Caki2 (cell line): ENCODE measurements at regions of chr14 and their contacts with region 1.

Region 1: GRCh38 chr14:35159742-35160409 is 37.5 kb downstream of the PRORP start:
- DNase-seq: peak; percentile 88

Region 2: DNA sequence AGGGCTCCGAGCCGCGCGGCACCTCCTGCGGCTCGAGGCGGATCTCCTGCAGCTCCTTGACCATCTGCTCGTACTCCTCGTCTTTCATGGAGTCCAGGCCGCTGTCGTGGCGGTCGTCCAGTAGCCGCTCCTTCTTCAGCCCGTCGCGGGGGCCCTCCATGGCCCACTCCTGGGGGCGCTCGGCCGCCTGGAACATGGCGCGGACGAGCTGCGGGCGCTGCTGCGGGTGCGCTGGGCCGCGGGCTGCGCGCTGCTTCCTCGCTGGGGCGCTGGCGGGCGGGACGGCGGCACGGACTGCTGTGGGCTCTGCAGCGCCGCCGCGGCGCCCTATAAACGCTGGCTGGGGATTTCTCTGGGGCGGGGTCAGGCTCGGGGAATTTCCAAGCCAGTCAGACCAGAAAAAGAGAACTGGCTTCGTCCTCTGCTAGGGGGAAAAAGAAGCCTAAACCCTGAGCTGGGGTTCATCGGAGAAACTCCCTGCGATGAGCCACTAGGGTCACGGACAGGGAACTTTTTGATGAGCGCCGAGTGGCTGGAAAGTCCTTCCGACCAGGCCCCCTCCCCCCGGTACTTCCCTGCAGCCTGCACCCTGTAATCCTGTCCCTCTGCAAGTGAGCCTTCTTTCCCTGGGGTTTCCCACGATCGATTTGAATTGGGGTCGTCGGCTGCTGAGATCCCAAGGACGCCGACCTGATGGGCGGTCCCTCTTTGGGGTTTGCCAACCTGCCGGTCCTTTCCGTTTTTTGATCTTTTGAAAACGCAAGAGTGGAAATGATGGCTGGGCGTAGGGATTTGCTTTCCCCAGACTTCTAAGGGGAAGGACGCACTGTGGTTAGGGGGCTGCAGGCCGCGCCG is 244.8 kb after region 1 on chr14 and contains the start of gene NFKBIA:
- in situ Hi-C with region 1: loop called (anchors 10 kb)
- DNase-seq: peak; percentile 89
- total RNA-seq, gene NFKBIA: 148 and 158 TPM in 2 replicates